ENCODE measurements at regions of chr14 and their contacts with region 1.

Region 1: GRCh38 chr14:73728717-73729330 is 14.6 kb upstream of the PNMA1 start:
- DNase-seq: peak; percentile 70 to 95 (median 86)
- ATAC-seq: peak; percentile 93
- H3K4me3 ChIP-seq: no peak overlapping the region
- H3K4me3 Mint-ChIP-seq: no peak overlapping the region
- H3K27ac ChIP-seq: peak overlapping the region in 1 of 2 experiments; percentile 23
- H3K27ac Mint-ChIP-seq: peak overlapping the region; percentile 79
- H3K4me1 ChIP-seq: no peaks in the 10 kb centered on the region
- H3K4me1 Mint-ChIP-seq: peaks cover 13% of the 10 kb centered on the region
- H3K27me3 ChIP-seq: no peaks in the 10 kb centered on the region
- H3K27me3 Mint-ChIP-seq: no peaks in the 10 kb centered on the region
- CTCF ChIP-seq: peak; percentile 97

Region 2: DNA sequence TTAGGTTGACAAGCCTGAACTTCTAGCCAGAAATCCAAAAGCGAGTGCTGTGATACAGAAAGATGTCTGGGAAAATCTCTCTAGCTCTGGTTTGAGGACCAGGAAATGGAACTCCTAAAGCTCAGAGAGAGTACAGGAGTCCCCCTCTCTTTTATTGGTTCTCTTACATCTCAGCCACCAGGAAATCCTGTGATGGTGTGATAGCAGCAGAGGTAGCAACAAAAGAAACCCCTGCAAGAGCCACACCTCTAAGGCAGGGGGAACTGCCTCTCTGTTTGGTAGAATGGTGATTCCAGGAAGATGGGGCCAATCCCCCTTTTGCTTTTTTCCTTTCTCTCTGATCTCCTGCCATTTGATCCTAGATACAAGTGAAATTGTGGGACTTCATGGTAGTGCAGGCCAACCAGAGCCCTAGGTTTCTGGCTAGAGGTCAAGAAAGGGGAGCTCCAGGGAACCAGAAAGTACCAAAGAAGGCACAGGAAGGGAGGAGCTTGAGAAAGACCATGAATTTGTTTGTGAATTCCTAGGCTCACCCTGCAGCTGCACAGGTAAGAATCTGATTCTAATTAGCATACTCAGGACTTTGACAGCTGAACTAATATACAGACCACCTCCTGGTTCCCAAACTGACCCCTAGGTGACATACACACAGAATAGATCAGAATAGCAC is 403.1 kb before region 1 on chr14:
- CTCF ChIA-PET with region 1: no interaction called
- POLR2A ChIA-PET with region 1: no interaction called
- intact Hi-C with region 1: no loop called
- DNase-seq: peak in 2 of 9 experiments; percentile 18 to 56
- ATAC-seq: peak; percentile 48
- H3K4me3 ChIP-seq: no peak overlapping the region
- H3K4me3 Mint-ChIP-seq: peak overlapping the region; percentile 11
- H3K27ac ChIP-seq: peak overlapping the region in 1 of 2 experiments; percentile 10
- H3K27ac Mint-ChIP-seq: peak overlapping the region; percentile 77
- H3K4me1 ChIP-seq: peaks cover 34% of the 10 kb centered on the region
- H3K4me1 Mint-ChIP-seq: peaks cover 39% of the 10 kb centered on the region
- H3K27me3 ChIP-seq: no peaks in the 10 kb centered on the region
- H3K27me3 Mint-ChIP-seq: no peaks in the 10 kb centered on the region
- CTCF ChIP-seq: no peak

Region 3: DNA sequence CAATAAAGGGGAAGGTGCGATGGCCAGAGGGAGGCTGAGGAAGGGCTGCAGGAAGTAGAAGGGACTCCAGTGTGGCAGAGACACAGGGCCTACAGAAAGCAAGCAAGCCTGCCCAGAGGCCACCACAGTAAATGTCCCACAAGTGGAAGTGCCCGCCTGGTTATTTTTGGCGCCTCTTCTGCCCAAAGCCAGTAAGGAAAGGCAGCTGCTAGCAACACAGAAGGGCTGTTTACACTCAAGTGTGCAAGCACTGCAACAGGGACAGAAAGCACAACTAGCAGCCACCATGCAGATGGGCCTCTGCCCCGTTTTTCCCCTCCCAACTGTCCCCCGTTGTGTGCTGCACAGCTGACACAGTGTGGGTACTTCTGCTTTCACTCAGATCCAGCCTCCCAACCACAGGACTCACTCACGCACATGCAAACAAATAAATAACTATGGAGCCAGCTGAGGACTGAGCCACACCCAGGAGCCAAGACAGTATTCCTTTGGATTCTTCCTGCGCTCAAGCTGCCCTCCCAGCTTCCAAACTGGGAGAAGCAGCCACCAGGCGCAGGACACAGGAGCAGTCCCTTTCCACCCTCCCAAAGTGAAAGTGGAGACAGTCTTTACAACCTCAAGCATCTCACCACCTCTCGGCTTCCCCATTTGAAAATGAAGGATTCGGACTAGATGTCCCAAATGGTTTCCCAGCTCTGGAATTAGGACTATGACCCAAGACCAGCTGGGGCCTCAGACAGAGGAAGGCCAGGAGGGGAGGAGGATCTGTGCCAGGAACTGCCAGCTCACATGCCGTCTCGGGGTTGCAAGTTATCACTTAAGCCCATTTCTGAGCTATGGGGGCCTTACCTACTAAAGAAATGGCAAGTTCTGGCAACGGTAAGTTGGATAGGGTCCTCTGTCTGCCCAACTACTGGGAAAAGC is 25.4 kb after region 1 on chr14:
- CTCF ChIA-PET with region 1: interaction called, 52 read pairs
- POLR2A ChIA-PET with region 1: interaction called, 16 read pairs
- intact Hi-C with region 1: loop called in 1 of 2 experiments (anchors 2 kb)
- DNase-seq: peak in 3 of 9 experiments; percentile 43 to 74 (median 61)
- ATAC-seq: peak; percentile 17
- H3K4me3 ChIP-seq: peak overlapping the region; percentile 38 to 55
- H3K4me3 Mint-ChIP-seq: peak overlapping the region; percentile 85
- H3K27ac ChIP-seq: peak overlapping the region; percentile 67 to 85
- H3K27ac Mint-ChIP-seq: peak overlapping the region; percentile 97
- H3K4me1 ChIP-seq: peaks cover 94% of the 10 kb centered on the region
- H3K4me1 Mint-ChIP-seq: peaks cover 92% of the 10 kb centered on the region
- H3K27me3 ChIP-seq: no peaks in the 10 kb centered on the region
- H3K27me3 Mint-ChIP-seq: no peaks in the 10 kb centered on the region
- CTCF ChIP-seq: no peak

Region 4: DNA sequence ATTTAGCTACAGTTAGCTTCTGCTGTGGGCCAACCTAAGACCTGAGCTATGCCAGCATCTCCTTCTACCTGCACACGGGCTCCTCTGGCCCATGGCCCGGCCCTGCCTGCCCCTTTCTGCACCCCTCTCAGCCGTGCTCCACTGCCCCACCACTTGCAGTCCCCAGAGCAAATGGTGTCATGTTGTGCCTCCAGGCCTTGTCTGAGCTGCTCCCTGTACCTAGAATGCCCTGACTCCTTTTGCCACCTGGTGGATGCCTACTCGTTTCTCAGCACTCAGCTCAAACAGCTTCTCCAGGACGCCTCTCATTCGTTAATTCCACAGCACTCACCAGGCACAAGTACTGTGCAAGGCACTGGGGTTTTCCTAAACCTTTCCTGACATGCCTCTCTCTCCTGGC is 48.6 kb after region 1 on chr14:
- CTCF ChIA-PET with region 1: interaction called, 29 read pairs
- POLR2A ChIA-PET with region 1: no interaction called
- intact Hi-C with region 1: loop called (anchors 1 to 2 kb)
- DNase-seq: peak in 2 of 9 experiments; percentile 47 to 58
- ATAC-seq: peak; percentile 73
- H3K4me3 ChIP-seq: no peak overlapping the region
- H3K4me3 Mint-ChIP-seq: no peak overlapping the region
- H3K27ac ChIP-seq: no peak overlapping the region
- H3K27ac Mint-ChIP-seq: peak overlapping the region; percentile 89
- H3K4me1 ChIP-seq: peaks cover 55% of the 10 kb centered on the region
- H3K4me1 Mint-ChIP-seq: peaks cover 67% of the 10 kb centered on the region
- H3K27me3 ChIP-seq: no peaks in the 10 kb centered on the region
- H3K27me3 Mint-ChIP-seq: no peaks in the 10 kb centered on the region
- CTCF ChIP-seq: no peak

Region 5: GRCh38 chr14:73825551-73826188 is 96.8 kb after region 1 on chr14:
- CTCF ChIA-PET with region 1: interaction called, 186 read pairs
- POLR2A ChIA-PET with region 1: interaction called, 4 read pairs
- intact Hi-C with region 1: loop called (anchors 1 kb)
- DNase-seq: peak; percentile 48 to 86 (median 81)
- ATAC-seq: peak; percentile 97
- H3K4me3 ChIP-seq: no peak overlapping the region
- H3K4me3 Mint-ChIP-seq: no peak overlapping the region
- H3K27ac ChIP-seq: no peak overlapping the region
- H3K27ac Mint-ChIP-seq: no peak overlapping the region
- H3K4me1 ChIP-seq: no peaks in the 10 kb centered on the region
- H3K4me1 Mint-ChIP-seq: peaks cover 10% of the 10 kb centered on the region
- H3K27me3 ChIP-seq: no peaks in the 10 kb centered on the region
- H3K27me3 Mint-ChIP-seq: no peaks in the 10 kb centered on the region
- CTCF ChIP-seq: peak; percentile 86

Region 6: DNA sequence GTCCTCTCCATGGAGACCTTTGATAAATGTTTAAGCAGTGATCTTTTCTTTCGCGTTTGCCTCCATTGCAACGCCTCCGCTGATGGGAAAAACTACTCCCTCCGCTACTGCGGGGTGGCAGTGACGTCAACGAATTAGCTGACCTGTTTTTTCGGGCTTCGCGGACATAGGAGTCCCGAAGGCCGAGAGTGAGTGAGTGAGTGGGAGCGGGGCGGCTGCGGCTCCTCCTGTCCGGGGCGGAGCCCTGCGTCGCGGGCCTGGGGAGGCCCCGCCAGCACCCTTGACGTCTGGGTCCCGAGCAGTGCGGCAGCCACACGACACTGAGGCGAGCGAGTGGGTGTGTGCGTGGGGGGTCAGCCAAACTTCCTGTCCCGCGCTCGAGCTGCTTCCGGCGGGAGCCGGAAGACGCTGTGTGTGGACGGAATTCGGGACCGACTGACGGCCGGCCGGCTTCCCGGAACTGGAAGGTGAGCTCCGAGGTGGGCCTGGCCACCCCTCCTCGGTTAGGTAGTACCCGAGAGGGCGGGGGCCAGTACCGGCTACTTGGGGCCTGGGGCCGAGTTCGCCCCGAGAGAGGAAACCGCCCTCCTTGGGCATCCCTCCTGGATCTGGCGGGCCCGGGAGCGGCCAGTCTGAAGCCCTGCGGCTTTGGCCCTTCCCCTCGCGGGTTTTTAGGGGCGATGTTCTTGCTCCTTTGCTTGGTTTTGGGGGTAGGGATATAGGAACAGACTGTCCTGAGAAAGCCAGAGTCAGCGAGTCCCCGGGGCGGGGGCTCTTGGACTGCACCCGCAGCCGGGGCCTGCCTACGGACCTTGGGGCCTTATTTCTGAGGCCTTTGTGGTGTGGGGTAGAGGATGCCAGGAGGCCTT is 157.9 kb after region 1 on chr14 and contains the start of gene ZNF410:
- CTCF ChIA-PET with region 1: interaction called, 4 read pairs
- POLR2A ChIA-PET with region 1: no interaction called
- intact Hi-C with region 1: loop called in 1 of 2 experiments (anchors 1 kb)
- DNase-seq: peak; percentile 70 to 95 (median 85)
- ATAC-seq: peak; percentile 98
- H3K4me3 ChIP-seq: peak within 1 kb of the TSS; percentile 90
- H3K4me3 Mint-ChIP-seq: peak within 1 kb of the TSS; percentile 98
- H3K27ac ChIP-seq: peak within 1 kb of the TSS; percentile 91 to 99
- H3K27ac Mint-ChIP-seq: peak within 1 kb of the TSS; percentile 99
- H3K4me1 ChIP-seq: peaks cover 19% of the 10 kb centered on the region
- H3K4me1 Mint-ChIP-seq: peaks cover 46% of the 10 kb centered on the region
- H3K27me3 ChIP-seq: no peaks in the 10 kb centered on the region
- H3K27me3 Mint-ChIP-seq: no peaks in the 10 kb centered on the region
- CTCF ChIP-seq: no peak
- total RNA-seq, gene ZNF410: 86.6 to 89.2 TPM